Activated T-helper 2 cell treated with anti-CD3 and anti-CD28 coated beads, Interferon-gamma antibody, Interleukin-2, Interleukin-4, amounts not matched to agents 10 μg/mL and 5 μg/mL and 100 μg/mL, durations not matched to agents 14 hours and 24 hours and 36 hours (primary cell): ENCODE measurements at regions of chr2 and their contacts with region 1.

Region 1: DNA sequence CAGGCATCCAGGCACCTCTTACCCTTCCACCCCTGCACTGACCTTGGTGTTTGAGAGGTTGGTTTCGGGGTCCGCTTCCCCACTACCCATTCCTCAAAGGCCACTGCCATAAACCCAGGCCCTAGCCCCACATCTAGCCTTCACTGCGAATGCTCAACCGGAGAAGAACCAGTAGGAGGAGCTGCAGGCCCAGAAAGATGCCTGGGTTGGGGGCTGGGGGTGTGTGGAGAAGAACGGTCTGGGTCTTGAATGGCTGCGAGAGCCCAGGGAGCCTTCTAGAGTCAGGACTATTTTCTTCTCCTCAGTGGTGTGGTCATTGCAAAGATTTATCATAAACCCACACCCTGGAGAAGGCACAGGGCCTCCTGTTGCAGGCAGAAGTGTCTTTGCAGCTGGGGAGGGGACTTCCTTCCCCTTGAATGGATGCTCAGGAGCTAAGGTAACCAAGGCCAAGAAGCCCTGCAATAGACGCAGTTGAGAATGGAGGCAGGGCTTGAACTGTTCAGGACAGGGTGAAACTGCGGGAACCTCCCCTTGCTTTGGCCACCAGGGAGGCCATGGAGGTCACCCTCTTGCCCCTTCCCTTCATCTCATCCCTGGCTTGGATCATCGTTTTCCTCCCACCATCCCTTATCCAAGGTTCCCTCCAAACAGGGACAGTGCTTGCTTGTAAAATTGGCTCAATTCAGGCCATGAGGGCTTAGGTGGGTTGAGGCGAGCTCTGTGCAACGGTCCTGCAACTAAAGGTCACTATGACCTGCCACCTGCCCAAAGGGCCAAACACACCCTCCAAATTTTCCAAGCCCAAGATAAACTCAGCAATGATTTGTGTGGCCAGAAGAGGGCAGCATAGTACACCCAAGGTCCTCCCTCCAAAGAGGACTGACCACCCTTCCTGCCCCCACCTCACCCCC is 20.9 kb downstream of the THNSL2 start:
- DNase-seq: no peak
- H3K4me3 Mint-ChIP-seq: no peak overlapping the region
- H3K27ac Mint-ChIP-seq: no peak overlapping the region
- H3K4me1 Mint-ChIP-seq: peaks cover 12% of the 10 kb centered on the region
- H3K27me3 Mint-ChIP-seq: no peaks in the 10 kb centered on the region

Region 2: GRCh38 chr2:88139203-88139702 is 51.8 kb before region 1 on chr2:
- intact Hi-C with region 1: no loop called
- DNase-seq: no peak
- H3K4me3 Mint-ChIP-seq: no peak overlapping the region
- H3K27ac Mint-ChIP-seq: no peak overlapping the region
- H3K4me1 Mint-ChIP-seq: no peaks in the 10 kb centered on the region
- H3K27me3 Mint-ChIP-seq: peaks cover 30% of the 10 kb centered on the region

Region 3: GRCh38 chr2:88230911-88231310 is 39.8 kb after region 1 on chr2:
- intact Hi-C with region 1: no loop called
- DNase-seq: no peak
- H3K4me3 Mint-ChIP-seq: no peak overlapping the region
- H3K27ac Mint-ChIP-seq: no peak overlapping the region
- H3K4me1 Mint-ChIP-seq: no peaks in the 10 kb centered on the region
- H3K27me3 Mint-ChIP-seq: peaks cover 18% of the 10 kb centered on the region

Region 4: DNA sequence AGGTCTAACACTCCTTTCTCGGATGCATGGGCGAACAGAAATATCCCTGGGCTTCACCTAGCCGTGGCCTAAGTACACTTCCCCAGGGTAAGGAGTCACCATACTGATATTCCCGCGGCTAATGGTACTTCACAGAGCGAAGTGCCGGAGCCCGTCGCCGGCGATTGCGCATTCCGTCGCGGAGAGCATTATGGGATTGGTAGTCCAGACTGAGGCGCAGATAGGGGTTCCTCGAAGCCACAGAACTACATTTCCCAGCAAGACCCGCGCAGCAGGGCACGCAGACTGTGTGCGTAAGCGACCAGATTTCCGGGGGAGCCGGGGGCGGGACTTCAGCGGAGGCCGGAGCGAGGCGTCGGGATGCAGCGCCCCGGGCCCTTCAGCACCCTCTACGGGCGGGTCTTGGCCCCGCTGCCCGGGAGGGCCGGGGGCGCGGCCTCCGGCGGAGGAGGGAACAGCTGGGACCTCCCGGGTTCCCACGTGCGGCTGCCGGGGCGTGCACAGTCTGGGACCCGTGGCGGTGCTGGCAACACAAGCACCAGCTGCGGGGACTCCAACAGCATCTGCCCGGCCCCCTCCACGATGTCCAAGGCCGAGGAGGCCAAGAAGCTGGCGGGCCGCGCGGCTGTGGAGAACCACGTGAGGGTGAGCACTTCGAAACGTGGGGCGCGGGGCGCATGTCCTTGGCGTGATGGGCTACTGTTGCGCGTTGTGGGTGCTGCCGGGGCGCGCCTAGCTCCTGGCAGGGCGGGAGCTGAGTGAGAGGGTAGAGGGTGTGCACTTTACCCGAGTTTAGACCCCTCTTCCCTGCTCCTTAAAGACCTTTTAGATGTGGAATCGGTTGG is 500.5 kb after region 1 on chr2 and contains the start of gene RPIA:
- intact Hi-C with region 1: loop called (anchors 10 kb)
- DNase-seq: peak; percentile 98
- H3K4me3 Mint-ChIP-seq: peak within 1 kb of the TSS; percentile 86
- H3K27ac Mint-ChIP-seq: peak within 1 kb of the TSS; percentile 92
- H3K4me1 Mint-ChIP-seq: peaks cover 28% of the 10 kb centered on the region
- H3K27me3 Mint-ChIP-seq: no peaks in the 10 kb centered on the region
- total RNA-seq, gene RPIA: 67.1 and 68.4 TPM in 2 replicates